B cell (primary cell): ENCODE measurements at regions of chr15 and their contacts with region 1.

Region 1: DNA sequence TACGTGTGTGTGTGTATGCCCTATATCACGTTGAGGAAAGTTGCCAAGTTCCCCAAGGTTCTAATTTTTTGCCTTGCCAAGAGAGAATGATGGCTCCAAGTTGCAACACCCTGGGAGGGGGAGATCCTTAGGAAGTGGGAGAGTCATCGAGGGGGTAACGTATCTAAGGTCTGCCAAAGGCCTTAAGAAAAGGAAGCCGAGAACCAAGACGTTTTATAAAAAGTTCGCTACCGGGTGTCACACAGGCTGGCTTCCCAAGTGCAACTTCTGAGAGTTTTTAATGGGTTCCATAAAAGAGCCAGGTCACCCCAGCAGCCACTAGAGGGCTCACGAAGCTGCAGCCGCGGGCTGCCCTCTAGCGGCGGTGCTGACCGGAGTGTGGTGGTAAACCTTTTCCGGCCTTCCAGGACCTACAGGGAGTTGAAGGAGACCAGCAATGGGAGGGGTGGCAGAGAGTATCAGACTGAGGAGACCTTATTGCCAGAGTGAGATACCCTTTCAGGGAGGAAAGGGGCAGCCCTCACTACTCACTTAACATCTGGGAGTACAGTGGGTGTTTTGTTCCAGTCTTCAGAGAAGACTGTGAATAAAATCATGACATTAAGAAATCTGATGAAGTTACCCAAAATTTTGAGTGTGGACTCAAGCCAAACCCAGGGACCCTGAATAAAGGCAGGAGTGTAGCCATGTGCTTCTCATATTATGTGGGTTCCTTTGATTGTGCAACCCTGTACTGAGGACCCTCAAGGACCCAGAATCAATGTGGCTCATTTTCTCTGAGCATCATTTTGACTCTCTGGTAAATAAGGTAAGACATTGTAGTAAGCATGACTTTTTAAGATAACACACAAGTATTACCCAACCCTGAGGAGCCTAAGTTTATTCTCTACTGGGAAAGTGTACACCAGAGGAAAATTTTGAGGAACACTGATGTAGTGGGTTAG is 2.5 kb upstream of the RFX7 start:
- DNase-seq: peak; percentile 91
- ATAC-seq: peak; percentile 71
- H3K4me3 ChIP-seq: peak overlapping the region; percentile 11 to 66 (median 50)
- H3K4me3 Mint-ChIP-seq: peak overlapping the region; percentile 94
- H3K27ac ChIP-seq: peak overlapping the region; percentile 57 to 76
- H3K27ac Mint-ChIP-seq: peak overlapping the region; percentile 89
- H3K4me1 ChIP-seq: peaks cover 24 to 25% of the 10 kb centered on the region in 2 donors
- H3K4me1 Mint-ChIP-seq: peaks cover 32% of the 10 kb centered on the region
- H3K27me3 ChIP-seq: no peaks in the 10 kb centered on the region
- H3K27me3 Mint-ChIP-seq: no peaks in the 10 kb centered on the region
- CTCF ChIP-seq: peak; percentile 100

Region 2: DNA sequence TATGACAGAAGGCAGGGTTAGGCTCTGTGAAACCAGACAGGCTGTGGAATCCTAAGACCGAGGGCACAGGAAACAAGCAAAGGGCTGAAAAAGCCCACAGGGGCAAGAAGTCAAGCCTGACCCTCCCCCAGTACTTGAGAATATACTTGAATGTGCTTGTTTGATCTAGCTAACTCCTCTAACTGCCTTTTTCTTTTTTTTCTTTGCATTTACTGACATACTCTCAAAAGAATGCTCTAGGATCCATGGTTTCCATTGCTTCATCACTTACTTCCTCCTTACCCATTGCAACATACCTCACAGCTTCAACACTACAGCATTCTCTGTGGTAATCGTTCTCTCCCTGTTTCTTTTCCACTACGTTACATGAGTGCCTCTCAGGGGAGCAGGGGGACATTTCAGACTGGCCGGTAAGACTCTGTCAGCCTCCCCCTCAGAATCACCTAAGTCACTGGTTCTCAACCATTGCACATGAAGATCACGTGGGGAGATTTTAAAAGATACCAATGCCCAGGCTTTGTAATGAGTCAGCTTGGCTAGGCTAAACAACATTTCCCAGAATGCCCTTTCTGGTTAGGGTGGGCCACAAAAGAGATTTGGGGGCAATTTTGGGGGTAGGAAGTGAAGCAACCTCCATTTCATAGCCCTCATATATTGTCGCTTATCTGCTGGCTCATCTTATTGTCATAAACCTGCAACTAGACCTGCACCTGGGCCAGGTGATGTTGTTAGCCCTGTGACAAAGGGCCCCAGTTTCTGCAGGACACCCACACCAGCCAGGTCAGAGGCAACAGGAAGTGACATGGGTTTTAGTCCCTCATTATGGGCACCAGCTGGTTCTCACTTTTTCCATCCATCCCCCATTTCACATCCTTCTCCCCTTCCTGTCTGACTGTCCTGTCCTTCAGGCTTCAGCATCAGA is 1024.8 kb before region 1 on chr15:
- CTCF ChIA-PET with region 1: no interaction called
- POLR2A ChIA-PET with region 1: no interaction called
- intact Hi-C with region 1: loop called (anchors 5 kb)
- DNase-seq: peak; percentile 33
- ATAC-seq: peak; percentile 25
- H3K4me3 ChIP-seq: no peak overlapping the region
- H3K4me3 Mint-ChIP-seq: peak overlapping the region; percentile 30
- H3K27ac ChIP-seq: no peak overlapping the region
- H3K27ac Mint-ChIP-seq: peak overlapping the region; percentile 10
- H3K4me1 ChIP-seq: peaks cover 54 to 58% of the 10 kb centered on the region in 2 donors
- H3K4me1 Mint-ChIP-seq: peaks cover 58% of the 10 kb centered on the region
- H3K27me3 ChIP-seq: no peaks in the 10 kb centered on the region
- H3K27me3 Mint-ChIP-seq: no peaks in the 10 kb centered on the region
- CTCF ChIP-seq: no peak

Region 3: DNA sequence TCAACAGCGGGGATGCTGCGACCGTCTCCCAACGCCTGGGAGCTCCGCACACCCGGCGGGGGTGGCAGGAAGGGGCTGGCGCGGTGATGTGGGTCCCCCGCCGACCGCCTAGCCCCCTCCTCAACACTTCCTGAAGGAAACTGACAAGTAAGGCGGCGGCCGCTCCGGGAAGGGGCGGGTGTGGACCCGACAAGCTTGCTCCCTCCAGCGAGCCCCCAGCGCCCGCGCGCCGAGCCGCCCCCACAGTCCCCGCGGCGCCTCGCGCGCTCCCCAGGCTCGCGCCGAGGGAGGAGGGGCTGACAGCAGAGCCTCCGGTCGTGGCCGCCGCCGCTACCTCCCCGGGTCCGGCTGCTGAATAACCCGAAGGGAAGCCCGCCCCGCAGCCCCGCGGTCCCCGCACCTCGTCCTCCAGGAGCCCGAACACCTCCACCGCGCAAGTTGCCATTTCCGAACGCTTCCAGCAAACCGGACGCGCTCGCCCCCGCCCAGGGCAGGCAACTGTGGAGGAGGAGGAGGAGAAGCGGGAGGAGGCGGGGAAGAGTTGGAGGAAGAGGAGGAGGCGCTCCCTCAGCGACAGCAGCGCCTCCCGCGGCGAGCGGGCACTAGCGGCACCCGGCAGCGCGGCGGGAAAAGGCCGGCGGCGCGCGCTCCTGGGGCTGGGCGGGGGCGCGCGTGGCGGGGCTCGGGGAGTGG is 252.9 kb before region 1 on chr15 and contains the start of gene NEDD4:
- CTCF ChIA-PET with region 1: no interaction called
- POLR2A ChIA-PET with region 1: no interaction called
- intact Hi-C with region 1: loop called (anchors 2 kb)
- DNase-seq: peak; percentile 69
- ATAC-seq: peak; percentile 82
- H3K4me3 ChIP-seq: peak within 1 kb of the TSS; percentile 62 to 79 (median 70)
- H3K4me3 Mint-ChIP-seq: peak within 1 kb of the TSS; percentile 90
- H3K27ac ChIP-seq: no peak within 1 kb of the TSS
- H3K27ac Mint-ChIP-seq: no peak within 1 kb of the TSS
- H3K4me1 ChIP-seq: peaks cover 9% of the 10 kb centered on the region in 2 donors
- H3K4me1 Mint-ChIP-seq: peaks cover 13% of the 10 kb centered on the region
- H3K27me3 ChIP-seq: peaks cover 0 to 25% (median 12%) of the 10 kb centered on the region in 4 experiments
- H3K27me3 Mint-ChIP-seq: peaks cover 41% of the 10 kb centered on the region
- CTCF ChIP-seq: peak; percentile 28
- total RNA-seq, gene NEDD4: 1.6 and 2.3 TPM in 2 replicates

Region 4: GRCh38 chr15:56207092-56207491 is 39.1 kb before region 1 on chr15:
- CTCF ChIA-PET with region 1: interaction called, 14 read pairs
- POLR2A ChIA-PET with region 1: interaction called, 9 read pairs
- intact Hi-C with region 1: loop called (anchors 1 kb)
- DNase-seq: peak; percentile 55
- ATAC-seq: peak; percentile 75
- H3K4me3 ChIP-seq: peak overlapping the region in 1 of 5 experiments; percentile 30
- H3K4me3 Mint-ChIP-seq: peak overlapping the region; percentile 28
- H3K27ac ChIP-seq: peak overlapping the region in 1 of 2 donors; percentile 70
- H3K27ac Mint-ChIP-seq: peak overlapping the region; percentile 88
- H3K4me1 ChIP-seq: peaks cover 50 to 59% of the 10 kb centered on the region in 2 donors
- H3K4me1 Mint-ChIP-seq: peaks cover 76% of the 10 kb centered on the region
- H3K27me3 ChIP-seq: no peaks in the 10 kb centered on the region
- H3K27me3 Mint-ChIP-seq: no peaks in the 10 kb centered on the region
- CTCF ChIP-seq: no peak

Region 5: GRCh38 chr15:56234804-56235203 is 11.3 kb before region 1 on chr15:
- CTCF ChIA-PET with region 1: interaction called, 11 read pairs
- POLR2A ChIA-PET with region 1: no interaction called
- intact Hi-C with region 1: no loop called
- DNase-seq: no peak
- ATAC-seq: no peak
- H3K4me3 ChIP-seq: no peak overlapping the region
- H3K4me3 Mint-ChIP-seq: no peak overlapping the region
- H3K27ac ChIP-seq: no peak overlapping the region
- H3K27ac Mint-ChIP-seq: no peak overlapping the region
- H3K4me1 ChIP-seq: peaks cover 0 to 12% of the 10 kb centered on the region in 2 donors
- H3K4me1 Mint-ChIP-seq: peaks cover 29% of the 10 kb centered on the region
- H3K27me3 ChIP-seq: no peaks in the 10 kb centered on the region
- H3K27me3 Mint-ChIP-seq: no peaks in the 10 kb centered on the region
- CTCF ChIP-seq: no peak

Region 6: GRCh38 chr15:56428821-56429458 is 182.8 kb after region 1 on chr15:
- CTCF ChIA-PET with region 1: interaction called, 19 read pairs
- POLR2A ChIA-PET with region 1: no interaction called
- intact Hi-C with region 1: loop called (anchors 1 kb)
- DNase-seq: peak; percentile 49
- ATAC-seq: no peak
- H3K4me3 ChIP-seq: no peak overlapping the region
- H3K4me3 Mint-ChIP-seq: no peak overlapping the region
- H3K27ac ChIP-seq: no peak overlapping the region
- H3K27ac Mint-ChIP-seq: no peak overlapping the region
- H3K4me1 ChIP-seq: no peaks in the 10 kb centered on the region
- H3K4me1 Mint-ChIP-seq: no peaks in the 10 kb centered on the region
- H3K27me3 ChIP-seq: no peaks in the 10 kb centered on the region
- H3K27me3 Mint-ChIP-seq: no peaks in the 10 kb centered on the region
- CTCF ChIP-seq: peak; percentile 73

Region 7: DNA sequence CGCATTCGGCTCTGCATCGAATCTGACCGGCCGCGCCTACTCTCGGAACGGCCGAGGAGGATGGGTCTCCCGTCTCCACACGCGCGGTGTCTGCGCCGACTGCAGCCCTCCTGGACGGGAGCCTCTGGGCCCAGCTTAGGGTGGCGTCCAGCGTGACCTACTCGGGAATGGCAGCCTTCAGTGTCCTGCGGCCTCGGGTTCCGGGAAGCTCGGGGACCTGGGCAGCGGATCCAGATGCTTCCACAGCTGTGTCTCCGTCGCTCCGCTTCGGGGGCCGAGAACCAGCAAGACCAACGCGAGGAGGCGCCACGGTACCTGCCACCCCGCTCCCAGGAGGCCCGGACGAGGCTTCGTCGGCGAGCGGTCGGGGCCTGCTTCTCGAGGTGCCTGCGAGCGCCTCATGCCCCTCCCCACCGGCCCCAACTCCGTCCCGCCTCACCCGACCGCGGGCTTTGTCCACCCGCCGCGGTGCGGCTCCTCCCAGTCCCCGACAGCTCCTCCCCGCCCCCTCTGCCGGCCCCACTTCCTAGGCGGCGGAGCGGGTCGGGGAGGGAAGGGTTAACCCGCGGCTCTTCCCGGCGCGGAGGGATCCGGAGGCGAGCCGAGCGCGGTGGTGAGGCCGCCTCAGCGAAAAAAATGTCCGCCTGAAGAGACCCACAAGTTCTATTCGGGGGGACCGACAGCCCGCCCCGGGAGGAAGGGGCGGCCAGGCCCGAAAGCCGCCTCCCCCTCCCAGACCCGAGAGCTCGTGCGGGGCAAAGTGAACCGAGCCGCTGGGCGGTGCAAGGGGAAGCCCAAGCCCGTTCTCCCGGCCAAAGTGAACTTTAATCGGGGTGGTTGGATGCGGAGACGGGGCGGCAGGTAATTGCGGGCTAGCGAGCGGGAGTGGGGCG is 672.1 kb after region 1 on chr15 and contains the start of gene TCF12:
- CTCF ChIA-PET with region 1: no interaction called
- POLR2A ChIA-PET with region 1: no interaction called
- intact Hi-C with region 1: loop called (anchors 5 kb)
- DNase-seq: peak; percentile 97
- ATAC-seq: peak; percentile 74
- H3K4me3 ChIP-seq: peak within 1 kb of the TSS; percentile 80 to 92 (median 89)
- H3K4me3 Mint-ChIP-seq: peak within 1 kb of the TSS; percentile 93
- H3K27ac ChIP-seq: peak within 1 kb of the TSS; percentile 79 to 86
- H3K27ac Mint-ChIP-seq: peak within 1 kb of the TSS; percentile 92
- H3K4me1 ChIP-seq: peaks cover 19 to 21% of the 10 kb centered on the region in 2 donors
- H3K4me1 Mint-ChIP-seq: peaks cover 32% of the 10 kb centered on the region
- H3K27me3 ChIP-seq: no peaks in the 10 kb centered on the region
- H3K27me3 Mint-ChIP-seq: no peaks in the 10 kb centered on the region
- CTCF ChIP-seq: peak; percentile 59
- total RNA-seq, gene TCF12: 131 TPM in 2 replicates